ENCODE measurements at regions of chr11 and their contacts with region 1.

Region 1: GRCh38 chr11:118928108-118928870 is 2.6 kb upstream of the BCL9L start:
- DNase-seq: peak; percentile 98
- ATAC-seq: peak; percentile 67 to 71
- H3K4me3 ChIP-seq: peak overlapping the region; percentile 60 to 100 (median 82)
- H3K27ac ChIP-seq: peak overlapping the region; percentile 89 to 100 (median 96)
- H3K4me1 ChIP-seq: peaks cover 34 to 55% of the 10 kb centered on the region in 2 donors
- H3K27me3 ChIP-seq: no peaks in the 10 kb centered on the region
- CTCF ChIP-seq: peak; percentile 95 to 98 (median 97)
- POLR2A ChIP-seq: peak; percentile 60 to 73

Region 2: GRCh38 chr11:118689851-118690552 is 238.3 kb before region 1 on chr11:
- in situ Hi-C with region 1: loop called in 1 of 4 experiments (anchors 10 kb)
- intact Hi-C with region 1: loop called (anchors 1 kb)
- DNase-seq: peak; percentile 46 to 89
- ATAC-seq: peak; percentile 89 to 91
- H3K4me3 ChIP-seq: peak overlapping the region; percentile 47 to 64 (median 59)
- H3K27ac ChIP-seq: peak overlapping the region; percentile 70 to 83 (median 77)
- H3K4me1 ChIP-seq: peaks cover 0 to 4% of the 10 kb centered on the region in 2 donors
- H3K27me3 ChIP-seq: no peaks in the 10 kb centered on the region
- CTCF ChIP-seq: peak; percentile 80 to 89 (median 87)
- POLR2A ChIP-seq: no peak

Region 3: DNA sequence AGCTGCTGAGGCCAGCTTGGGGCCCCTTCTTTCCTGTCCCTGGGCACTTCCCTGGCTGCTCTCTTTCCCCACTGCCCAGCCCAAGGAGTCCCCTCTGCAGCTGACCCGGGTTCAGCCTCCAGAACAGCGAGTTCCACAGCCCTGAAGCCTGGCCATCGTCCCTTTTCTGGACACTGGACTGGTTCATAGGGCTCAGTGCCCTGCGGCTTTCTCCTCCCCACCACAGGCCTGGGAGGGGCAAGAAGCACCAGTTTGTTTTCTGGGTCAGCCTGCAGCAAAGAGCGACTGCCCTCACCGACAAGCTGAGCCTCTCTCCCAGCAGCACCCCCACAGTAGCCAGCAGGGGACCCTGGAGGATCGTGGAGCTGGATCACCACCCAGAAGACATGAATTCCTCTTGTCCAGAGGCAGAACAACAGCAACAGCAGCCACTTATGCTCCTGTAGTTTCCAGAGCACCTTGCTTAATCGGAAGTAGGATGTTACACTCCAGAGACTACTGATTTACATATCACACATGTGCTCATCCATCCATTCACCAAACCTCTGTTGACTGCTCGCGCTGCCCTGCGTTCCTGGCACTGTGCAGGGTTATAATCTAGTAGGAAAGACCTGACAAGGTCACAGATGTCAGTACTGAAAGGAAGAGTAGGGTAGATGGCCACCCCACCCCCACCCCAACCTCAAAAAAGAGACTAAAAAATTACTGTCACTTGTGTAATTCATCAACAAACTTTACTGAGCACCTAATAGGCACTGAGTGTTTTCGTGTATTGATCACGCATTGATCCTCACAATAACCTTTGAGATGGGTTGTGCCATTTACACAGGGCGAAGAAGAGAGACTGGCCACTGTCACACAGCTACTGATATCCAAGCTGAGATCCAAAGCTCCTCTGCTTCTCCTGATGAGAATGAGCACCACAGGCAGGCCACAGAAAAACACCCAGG is 57.6 kb before region 1 on chr11:
- in situ Hi-C with region 1: no loop called
- intact Hi-C with region 1: loop called (anchors 2 kb)
- DNase-seq: peak; percentile 66 to 67
- ATAC-seq: peak; percentile 68 to 74
- H3K4me3 ChIP-seq: peak overlapping the region; percentile 35 to 46 (median 42)
- H3K27ac ChIP-seq: peak overlapping the region; percentile 89 to 95 (median 94)
- H3K4me1 ChIP-seq: peaks cover 16 to 25% of the 10 kb centered on the region in 2 donors
- H3K27me3 ChIP-seq: no peaks in the 10 kb centered on the region
- CTCF ChIP-seq: no peak
- POLR2A ChIP-seq: peak; percentile 31 to 48

Region 4: GRCh38 chr11:118907051-118908042 is 20.9 kb before region 1 on chr11:
- in situ Hi-C with region 1: no loop called
- intact Hi-C with region 1: loop called (anchors 1 kb)
- DNase-seq: peak; percentile 72 to 87
- ATAC-seq: peak; percentile 41 to 48
- H3K4me3 ChIP-seq: no peak overlapping the region
- H3K27ac ChIP-seq: peak overlapping the region; percentile 89 to 100 (median 96)
- H3K4me1 ChIP-seq: peaks cover 52 to 54% of the 10 kb centered on the region in 2 donors
- H3K27me3 ChIP-seq: no peaks in the 10 kb centered on the region
- CTCF ChIP-seq: peak; percentile 94 to 99 (median 98)
- POLR2A ChIP-seq: no peak

Region 5: DNA sequence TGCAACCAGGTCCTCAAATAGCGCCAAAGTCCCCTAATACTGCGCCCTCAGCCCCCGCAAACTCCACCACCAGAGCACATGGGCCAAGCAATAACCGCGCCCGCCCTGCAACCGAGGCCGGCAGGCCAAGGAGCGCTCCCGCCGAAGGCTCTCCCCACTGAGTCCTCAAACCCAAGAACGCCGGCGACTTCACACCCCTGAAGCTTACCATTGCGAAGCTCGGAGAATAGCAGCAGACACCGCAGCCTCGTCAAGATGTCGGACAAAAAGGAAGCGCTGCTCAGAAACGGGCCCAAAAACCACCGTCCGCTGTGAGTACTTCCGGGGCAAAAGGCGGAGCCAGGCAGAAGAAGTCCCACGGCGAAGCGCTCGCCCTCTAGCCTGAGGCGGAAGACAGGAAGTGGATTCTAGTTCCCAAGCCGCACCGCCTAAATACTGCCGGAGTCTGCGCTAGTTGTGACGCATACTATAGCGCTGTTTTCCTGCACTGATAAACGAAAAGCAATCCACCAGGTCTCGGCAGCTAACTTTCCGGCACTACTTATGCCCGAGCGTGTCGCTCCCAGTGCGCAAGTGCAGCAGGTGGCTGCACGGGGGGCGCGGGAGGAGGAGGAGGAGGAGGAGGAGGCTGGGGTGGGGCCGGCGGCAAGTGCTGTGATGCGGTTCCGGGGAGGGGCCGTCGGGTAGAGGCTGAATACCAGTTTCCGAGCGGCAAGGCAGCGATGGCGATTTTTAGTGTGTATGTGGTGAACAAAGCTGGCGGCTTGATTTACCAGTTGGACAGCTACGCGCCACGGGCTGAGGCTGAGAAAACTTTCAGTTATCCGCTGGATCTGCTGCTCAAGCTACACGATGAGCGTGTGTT is 90.0 kb after region 1 on chr11 and contains the starts of genes RPS25 and TRAPPC4:
- in situ Hi-C with region 1: no loop called
- intact Hi-C with region 1: loop called (anchors 5 kb)
- DNase-seq: peak; percentile 94 to 96
- ATAC-seq: peak; percentile 95 to 96
- H3K4me3 ChIP-seq: peak within 1 kb of the TSS; percentile 70 to 99 (median 90)
- H3K27ac ChIP-seq: peak within 1 kb of the TSS; percentile 95 to 98 (median 98)
- H3K4me1 ChIP-seq: peaks cover 38 to 50% of the 10 kb centered on the region in 2 donors
- H3K27me3 ChIP-seq: no peaks in the 10 kb centered on the region
- CTCF ChIP-seq: no peak
- POLR2A ChIP-seq: peak; percentile 85 to 88
- total RNA-seq, gene RPS25: 1,700 to 2,567 (median 1,849) TPM
- total RNA-seq, gene TRAPPC4: 43.0 to 82.8 (median 66.9) TPM